Right ventricle myocardium inferior (tissue), 1 donor: ENCODE measurements at regions of chr12 and their contacts with region 1.

Region 1: DNA sequence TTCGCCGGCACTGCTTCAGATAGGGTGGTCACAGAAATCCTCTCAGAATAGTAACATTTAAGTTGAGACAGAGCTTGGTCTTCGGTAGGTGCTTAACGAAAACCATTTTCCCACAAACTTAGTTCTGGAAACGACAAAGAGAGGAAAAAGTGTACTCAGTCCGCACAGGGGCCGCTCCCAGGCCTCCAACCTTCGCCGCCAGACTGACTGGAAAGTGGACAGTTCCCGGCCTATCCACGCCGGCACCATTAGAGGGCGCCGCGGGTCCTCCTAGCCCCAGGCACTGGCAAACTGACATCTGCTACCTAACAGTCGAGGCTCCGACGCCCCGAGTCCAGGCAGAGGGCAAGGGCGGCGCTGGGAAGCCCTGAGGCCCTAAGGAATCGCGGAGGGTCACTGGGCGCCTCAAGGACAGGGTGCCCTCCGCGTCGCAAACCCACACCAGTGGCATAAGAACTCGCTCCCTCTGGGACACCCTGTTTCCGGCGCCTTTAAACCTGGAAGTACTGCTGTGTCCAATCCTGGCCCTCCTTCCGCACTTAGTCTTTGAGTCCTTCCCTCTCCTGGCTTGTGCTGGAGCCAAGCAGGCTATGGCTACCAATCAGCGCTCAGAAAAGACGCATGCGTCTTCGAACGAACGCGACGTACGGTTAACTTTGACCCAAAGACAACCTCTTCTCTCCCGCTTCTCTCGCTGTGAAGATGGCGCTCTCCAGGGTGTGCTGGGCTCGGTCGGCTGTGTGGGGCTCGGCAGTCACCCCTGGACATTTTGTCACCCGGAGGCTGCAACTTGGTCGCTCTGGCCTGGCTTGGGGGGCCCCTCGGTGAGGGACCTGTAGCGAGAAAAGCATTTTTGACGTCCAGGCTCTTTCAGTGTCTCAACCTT is at the start of gene LETMD1:
- DNase-seq: peak; percentile 94
- ATAC-seq: peak; percentile 99
- total RNA-seq, gene LETMD1: 17.0 TPM

Region 2: GRCh38 chr12:50132505-50133135 is 915.3 kb before region 1 on chr12:
- intact Hi-C with region 1: no loop called
- DNase-seq: no peak
- ATAC-seq: no peak

Region 3: GRCh38 chr12:51083126-51083833 is 35.4 kb after region 1 on chr12 and contains the start of gene CSRNP2:
- intact Hi-C with region 1: loop called (anchors 2 kb)
- DNase-seq: peak; percentile 99
- ATAC-seq: peak; percentile 100
- total RNA-seq, gene CSRNP2: 25.7 TPM

Region 4: GRCh38 chr12:51951199-51951842 is 903.4 kb after region 1 on chr12 and contains the start of gene ACVR1B:
- intact Hi-C with region 1: loop called (anchors 10 kb)
- DNase-seq: peak; percentile 97
- ATAC-seq: peak; percentile 96
- total RNA-seq, gene ACVR1B: 10.8 TPM